ENCODE measurements at regions of chr10 and their contacts with region 1.

Region 1: DNA sequence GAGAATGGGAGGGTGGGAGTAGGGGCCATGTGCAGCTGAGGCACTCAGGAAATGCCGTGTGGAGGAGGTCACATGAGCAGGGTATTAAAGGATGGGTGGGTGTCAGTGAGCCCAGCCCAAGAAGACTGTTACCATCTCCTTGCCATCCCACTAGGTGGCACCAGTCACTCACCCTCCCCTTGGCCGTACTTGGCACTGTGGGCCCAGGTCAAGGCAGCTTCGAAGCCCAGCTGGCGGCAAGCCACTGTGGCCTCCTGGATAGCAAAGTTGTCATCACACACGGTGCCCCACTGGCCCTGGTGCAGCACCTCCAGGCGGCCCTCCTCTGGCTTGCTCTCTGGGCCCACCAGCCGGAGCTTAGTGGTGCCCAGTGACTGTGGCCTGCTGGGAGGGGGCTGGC is 5.4 kb downstream of the LOXL4 start:
- DNase-seq: peak; percentile 42
- H3K4me3 ChIP-seq: no peak overlapping the region
- H3K27ac ChIP-seq: no peak overlapping the region
- H3K4me1 ChIP-seq: peaks cover 2% of the 10 kb centered on the region
- H3K27me3 ChIP-seq: no peaks in the 10 kb centered on the region
- CTCF ChIP-seq: peak; percentile 47 to 82

Region 2: GRCh38 chr10:98170249-98171117 is 92.1 kb before region 1 on chr10:
- CTCF ChIA-PET with region 1: no interaction called
- dilution Hi-C with region 1: no loop called
- in situ Hi-C with region 1: no loop called
- intact Hi-C with region 1: loop called (anchors 5 kb)
- DNase-seq: peak; percentile 50
- H3K4me3 ChIP-seq: no peak overlapping the region
- H3K27ac ChIP-seq: no peak overlapping the region
- H3K4me1 ChIP-seq: no peaks in the 10 kb centered on the region
- H3K27me3 ChIP-seq: no peaks in the 10 kb centered on the region
- CTCF ChIP-seq: peak; percentile 79 to 83

Region 3: GRCh38 chr10:98186681-98187080 is 75.9 kb before region 1 on chr10:
- CTCF ChIA-PET with region 1: no interaction called
- dilution Hi-C with region 1: no loop called
- in situ Hi-C with region 1: no loop called
- intact Hi-C with region 1: no loop called
- DNase-seq: peak; percentile 47
- H3K4me3 ChIP-seq: no peak overlapping the region
- H3K27ac ChIP-seq: peak overlapping the region; percentile 34
- H3K4me1 ChIP-seq: peaks cover 5% of the 10 kb centered on the region
- H3K27me3 ChIP-seq: no peaks in the 10 kb centered on the region
- CTCF ChIP-seq: no peak

Region 4: GRCh38 chr10:98331885-98332284 is 69.3 kb after region 1 on chr10:
- CTCF ChIA-PET with region 1: no interaction called
- dilution Hi-C with region 1: no loop called
- in situ Hi-C with region 1: no loop called
- intact Hi-C with region 1: loop called (anchors 1 kb)
- DNase-seq: peak; percentile 17
- H3K4me3 ChIP-seq: no peak overlapping the region
- H3K27ac ChIP-seq: no peak overlapping the region
- H3K4me1 ChIP-seq: no peaks in the 10 kb centered on the region
- H3K27me3 ChIP-seq: no peaks in the 10 kb centered on the region
- CTCF ChIP-seq: peak; percentile 58 to 79

Region 5: GRCh38 chr10:98394851-98395440 is 132.4 kb after region 1 on chr10:
- CTCF ChIA-PET with region 1: interaction called, 6 read pairs
- dilution Hi-C with region 1: no loop called
- in situ Hi-C with region 1: no loop called
- intact Hi-C with region 1: loop called (anchors 2 kb)
- DNase-seq: no peak
- H3K4me3 ChIP-seq: no peak overlapping the region
- H3K27ac ChIP-seq: no peak overlapping the region
- H3K4me1 ChIP-seq: peaks cover 13% of the 10 kb centered on the region
- H3K27me3 ChIP-seq: no peaks in the 10 kb centered on the region
- CTCF ChIP-seq: no peak

Region 6: DNA sequence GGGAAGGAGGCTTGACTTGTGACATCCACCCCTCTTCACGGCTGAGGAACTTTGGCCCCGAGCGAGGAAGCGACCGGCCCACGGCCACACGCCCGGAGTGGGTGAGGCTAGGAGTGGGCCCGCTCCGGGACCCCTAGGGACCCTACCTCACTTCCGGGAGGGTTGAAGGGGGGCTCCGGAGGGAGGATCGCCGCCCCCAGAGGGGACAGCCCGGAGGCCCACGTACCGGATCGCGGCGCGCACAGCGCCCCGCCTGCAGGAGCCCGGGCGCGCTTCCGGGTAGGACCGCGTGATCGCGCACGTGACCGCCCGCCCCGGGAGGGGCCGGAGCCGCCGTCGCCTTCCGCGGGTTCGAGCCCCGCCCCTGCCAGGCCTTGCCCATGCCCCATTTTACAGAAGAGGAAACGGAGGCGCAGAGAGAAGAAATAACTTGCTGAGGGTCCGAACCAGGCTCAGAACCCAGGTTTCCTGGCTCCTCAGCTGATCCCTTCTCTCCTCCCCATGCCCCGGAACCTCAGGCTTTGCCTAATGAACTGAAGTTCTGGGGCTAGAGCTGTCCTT is 184.2 kb after region 1 on chr10 and contains the start of gene HPS1:
- CTCF ChIA-PET with region 1: no interaction called
- dilution Hi-C with region 1: no loop called
- in situ Hi-C with region 1: no loop called
- intact Hi-C with region 1: loop called (anchors 10 kb)
- DNase-seq: peak; percentile 57
- H3K4me3 ChIP-seq: peak within 1 kb of the TSS; percentile 72 to 91 (median 75)
- H3K27ac ChIP-seq: peak within 1 kb of the TSS; percentile 68
- H3K4me1 ChIP-seq: peaks cover 8% of the 10 kb centered on the region
- H3K27me3 ChIP-seq: no peaks in the 10 kb centered on the region
- CTCF ChIP-seq: no peak
- total RNA-seq, gene HPS1: 37.3 to 54.6 TPM